ENCODE measurements at regions of chr5 and their contacts with region 1.

Region 1: DNA sequence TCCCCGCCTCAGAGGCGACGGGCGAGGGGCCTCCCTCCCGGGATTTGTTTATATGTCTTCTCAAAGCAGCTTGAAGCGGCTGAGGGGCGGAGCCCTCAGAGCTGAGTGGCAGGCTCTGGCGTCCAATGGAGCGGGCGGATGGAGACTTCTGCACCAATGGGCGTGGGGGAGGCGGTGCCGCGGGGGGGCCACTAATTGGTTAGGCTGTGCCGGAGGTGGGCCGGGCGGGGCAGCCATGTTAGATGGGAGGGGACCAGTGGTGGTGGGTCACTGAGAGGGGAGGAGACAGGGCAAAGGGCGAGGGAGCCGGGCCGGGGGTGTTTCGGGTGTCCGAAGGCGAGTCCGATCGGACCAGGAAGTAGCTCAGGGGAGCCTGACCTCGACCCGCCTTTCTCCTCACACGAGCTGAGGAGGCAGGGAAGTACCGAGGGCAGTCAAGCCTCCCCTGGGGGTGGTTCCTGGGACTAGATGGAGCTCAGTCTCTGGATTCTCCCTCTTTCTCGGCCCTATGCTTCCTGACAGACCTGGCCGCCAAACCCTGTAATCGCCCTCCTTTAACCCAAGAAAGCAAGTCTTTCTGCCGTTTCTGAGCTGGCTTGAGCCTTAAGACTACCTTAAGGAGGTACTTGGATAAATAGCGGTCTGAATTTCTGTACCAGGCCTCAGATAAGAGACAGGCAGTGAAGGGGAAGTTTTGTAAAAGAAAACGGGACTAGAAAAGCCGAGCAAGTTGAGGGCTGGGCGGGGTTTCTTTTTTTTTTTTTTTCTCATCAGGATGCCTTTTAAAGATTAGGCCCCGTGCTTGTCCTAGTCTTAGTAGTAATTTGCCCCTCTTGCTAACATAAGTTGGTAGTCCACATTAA is 1.1 kb downstream of the CREBRF start:
- DNase-seq: peak; percentile 98 to 99 (median 98)
- ATAC-seq: peak; percentile 81
- H3K4me3 ChIP-seq: peak overlapping the region; percentile 92 to 99
- H3K4me3 Mint-ChIP-seq: peak overlapping the region; percentile 94
- H3K27ac ChIP-seq: peak overlapping the region; percentile 80 to 81
- H3K27ac Mint-ChIP-seq: peak overlapping the region; percentile 94
- H3K4me1 ChIP-seq: peaks cover 36% of the 10 kb centered on the region
- H3K4me1 Mint-ChIP-seq: peaks cover 44% of the 10 kb centered on the region
- H3K27me3 ChIP-seq: no peaks in the 10 kb centered on the region
- H3K27me3 Mint-ChIP-seq: no peaks in the 10 kb centered on the region
- CTCF ChIP-seq: no peak

Region 2: DNA sequence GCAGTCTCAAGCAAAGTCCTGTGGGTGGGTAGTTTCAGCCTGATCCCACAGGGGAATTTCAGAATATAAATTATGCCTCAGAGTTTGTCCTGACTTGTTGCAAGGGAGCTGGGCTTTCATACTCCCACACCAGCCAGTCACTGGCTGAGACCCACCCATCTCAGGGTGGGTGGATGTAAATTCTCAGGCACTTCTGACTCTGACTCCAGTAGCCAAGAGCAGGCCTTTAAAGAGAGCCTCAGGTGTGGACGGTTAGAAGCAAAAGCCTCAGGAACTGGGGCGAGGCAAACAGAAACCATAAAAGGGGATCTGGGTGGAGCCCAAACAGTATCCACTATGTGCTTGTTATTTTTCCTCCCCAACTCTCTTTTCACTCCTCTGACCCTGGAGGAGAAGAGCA is 1022.3 kb before region 1 on chr5:
- CTCF ChIA-PET with region 1: no interaction called
- POLR2A ChIA-PET with region 1: no interaction called
- intact Hi-C with region 1: no loop called
- DNase-seq: no peak
- ATAC-seq: no peak
- H3K4me3 ChIP-seq: no peak overlapping the region
- H3K4me3 Mint-ChIP-seq: no peak overlapping the region
- H3K27ac ChIP-seq: no peak overlapping the region
- H3K27ac Mint-ChIP-seq: no peak overlapping the region
- H3K4me1 ChIP-seq: no peaks in the 10 kb centered on the region
- H3K4me1 Mint-ChIP-seq: peaks cover 11% of the 10 kb centered on the region
- H3K27me3 ChIP-seq: no peaks in the 10 kb centered on the region
- H3K27me3 Mint-ChIP-seq: no peaks in the 10 kb centered on the region
- CTCF ChIP-seq: no peak

Region 3: GRCh38 chr5:172179361-172179989 is 877.8 kb before region 1 on chr5:
- CTCF ChIA-PET with region 1: no interaction called
- POLR2A ChIA-PET with region 1: no interaction called
- intact Hi-C with region 1: loop called in 1 of 2 experiments (anchors 5 kb)
- DNase-seq: peak in 8 of 9 experiments; percentile 36 to 86 (median 58)
- ATAC-seq: peak; percentile 9
- H3K4me3 ChIP-seq: peak overlapping the region; percentile 49 to 51
- H3K4me3 Mint-ChIP-seq: peak overlapping the region; percentile 80
- H3K27ac ChIP-seq: peak overlapping the region; percentile 92 to 97
- H3K27ac Mint-ChIP-seq: peak overlapping the region; percentile 97
- H3K4me1 ChIP-seq: peaks cover 90% of the 10 kb centered on the region
- H3K4me1 Mint-ChIP-seq: peaks cover 89% of the 10 kb centered on the region
- H3K27me3 ChIP-seq: no peaks in the 10 kb centered on the region
- H3K27me3 Mint-ChIP-seq: no peaks in the 10 kb centered on the region
- CTCF ChIP-seq: no peak

Region 4: GRCh38 chr5:172764849-172765765 is 292.2 kb before region 1 on chr5:
- CTCF ChIA-PET with region 1: no interaction called
- POLR2A ChIA-PET with region 1: no interaction called
- intact Hi-C with region 1: loop called (anchors 1 to 2 kb)
- DNase-seq: peak; percentile 88 to 100 (median 96)
- ATAC-seq: peak; percentile 77
- H3K4me3 ChIP-seq: peak overlapping the region; percentile 41 to 48
- H3K4me3 Mint-ChIP-seq: peak overlapping the region; percentile 81
- H3K27ac ChIP-seq: peak overlapping the region; percentile 86 to 89
- H3K27ac Mint-ChIP-seq: peak overlapping the region; percentile 96
- H3K4me1 ChIP-seq: peaks cover 33% of the 10 kb centered on the region
- H3K4me1 Mint-ChIP-seq: peaks cover 52% of the 10 kb centered on the region
- H3K27me3 ChIP-seq: no peaks in the 10 kb centered on the region
- H3K27me3 Mint-ChIP-seq: no peaks in the 10 kb centered on the region
- CTCF ChIP-seq: no peak

Region 5: GRCh38 chr5:172920447-172920849 is 136.8 kb before region 1 on chr5:
- CTCF ChIA-PET with region 1: no interaction called
- POLR2A ChIA-PET with region 1: no interaction called
- intact Hi-C with region 1: loop called in 1 of 2 experiments (anchors 2 kb)
- DNase-seq: no peak
- ATAC-seq: no peak
- H3K4me3 ChIP-seq: no peak overlapping the region
- H3K4me3 Mint-ChIP-seq: no peak overlapping the region
- H3K27ac ChIP-seq: no peak overlapping the region
- H3K27ac Mint-ChIP-seq: peak overlapping the region; percentile 100
- H3K4me1 ChIP-seq: peaks cover 26% of the 10 kb centered on the region
- H3K4me1 Mint-ChIP-seq: peaks cover 27% of the 10 kb centered on the region
- H3K27me3 ChIP-seq: no peaks in the 10 kb centered on the region
- H3K27me3 Mint-ChIP-seq: no peaks in the 10 kb centered on the region
- CTCF ChIP-seq: no peak

Region 6: DNA sequence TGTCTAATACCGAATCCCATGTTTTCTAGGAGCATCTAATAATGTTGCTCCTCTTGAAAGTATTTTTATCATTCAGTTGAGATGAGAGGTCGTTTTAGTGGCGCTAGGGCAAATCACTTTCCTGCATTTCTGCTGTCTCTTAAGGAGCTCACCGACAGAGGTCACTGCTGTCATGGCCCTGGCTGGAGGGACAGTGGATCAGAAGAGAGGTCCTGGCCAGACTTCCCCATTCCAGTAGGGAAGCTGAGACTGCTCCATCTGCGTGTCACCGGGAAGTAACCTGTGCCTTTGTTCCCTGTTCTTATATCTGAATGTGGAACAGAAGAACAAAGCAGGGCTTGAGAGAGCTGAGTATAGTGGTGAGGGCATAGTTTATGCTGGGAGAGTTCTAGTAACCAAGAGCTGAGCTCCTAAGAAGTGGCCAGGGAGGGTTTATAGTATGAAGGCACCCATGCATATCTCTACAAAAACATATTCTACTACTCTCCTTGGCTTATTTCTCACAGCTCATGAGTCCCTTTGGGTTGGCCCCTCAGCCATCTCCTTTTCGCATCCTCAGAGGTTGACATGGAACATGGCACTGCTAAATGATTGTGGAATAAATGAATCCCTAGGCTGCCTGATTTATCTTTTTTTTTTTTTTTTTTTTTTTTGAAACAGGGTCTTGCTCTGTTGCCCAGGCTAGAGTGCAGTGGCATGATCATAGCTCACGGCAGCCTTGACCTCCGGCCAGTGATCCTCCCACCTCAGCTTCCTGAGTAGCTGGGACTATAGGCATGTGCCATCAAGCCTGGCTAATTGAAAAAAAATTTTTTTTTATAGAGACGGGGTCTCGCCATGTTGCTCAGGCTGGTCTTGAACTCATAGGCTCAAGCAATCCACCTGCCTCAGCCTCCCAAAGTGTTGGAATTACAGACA is 46.5 kb before region 1 on chr5:
- CTCF ChIA-PET with region 1: no interaction called
- POLR2A ChIA-PET with region 1: no interaction called
- intact Hi-C with region 1: no loop called
- DNase-seq: peak in 2 of 9 experiments; percentile 14 to 37
- ATAC-seq: no peak
- H3K4me3 ChIP-seq: no peak overlapping the region
- H3K4me3 Mint-ChIP-seq: no peak overlapping the region
- H3K27ac ChIP-seq: no peak overlapping the region
- H3K27ac Mint-ChIP-seq: peak overlapping the region; percentile 75
- H3K4me1 ChIP-seq: peaks cover 12% of the 10 kb centered on the region
- H3K4me1 Mint-ChIP-seq: peaks cover 58% of the 10 kb centered on the region
- H3K27me3 ChIP-seq: no peaks in the 10 kb centered on the region
- H3K27me3 Mint-ChIP-seq: no peaks in the 10 kb centered on the region
- CTCF ChIP-seq: no peak

Region 7: DNA sequence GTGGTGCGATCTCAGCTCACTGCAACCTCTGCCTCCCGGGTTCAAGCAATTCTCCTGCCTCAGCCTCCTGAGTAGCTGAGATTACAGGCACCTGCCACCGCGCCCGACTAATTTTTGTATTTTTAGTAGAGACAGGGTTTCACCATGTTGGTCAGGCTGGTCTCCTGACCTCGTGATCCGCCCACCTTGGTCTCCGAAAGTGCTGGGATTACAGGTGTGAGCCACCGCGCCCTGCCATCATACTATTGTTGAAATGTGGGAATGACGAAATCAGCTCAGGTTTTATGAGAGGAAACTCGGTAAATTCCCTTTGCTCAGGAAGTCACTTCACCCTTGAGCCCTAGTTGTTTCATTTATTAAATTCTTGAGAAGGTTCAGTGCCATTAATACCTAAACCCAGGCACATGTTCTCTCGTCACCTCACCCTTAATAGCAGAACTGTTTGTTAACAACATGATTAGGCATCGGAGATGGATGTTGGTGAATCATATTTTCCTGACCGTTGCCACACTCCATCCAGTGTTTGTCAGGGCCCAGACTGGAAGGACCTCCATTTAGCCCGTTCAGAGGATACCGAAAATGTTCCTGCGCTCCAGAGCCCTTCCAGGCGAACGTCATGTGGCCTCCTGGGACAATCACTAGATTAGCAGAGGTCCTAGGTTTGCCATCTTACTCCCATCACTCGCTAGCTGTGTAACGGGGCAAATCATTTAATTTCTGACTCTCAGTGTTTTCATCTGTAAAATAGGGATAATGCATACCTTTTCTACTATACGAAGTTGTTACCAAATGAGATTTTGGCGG is 21.2 kb before region 1 on chr5:
- CTCF ChIA-PET with region 1: interaction called, 3 read pairs
- POLR2A ChIA-PET with region 1: interaction called, 13 read pairs
- intact Hi-C with region 1: loop called (anchors 1 to 2 kb)
- DNase-seq: peak in 1 of 9 experiments; percentile 23
- ATAC-seq: no peak
- H3K4me3 ChIP-seq: peak overlapping the region in 1 of 2 experiments; percentile 19
- H3K4me3 Mint-ChIP-seq: peak overlapping the region; percentile 78
- H3K27ac ChIP-seq: peak overlapping the region; percentile 32 to 83
- H3K27ac Mint-ChIP-seq: peak overlapping the region; percentile 95
- H3K4me1 ChIP-seq: peaks cover 40% of the 10 kb centered on the region
- H3K4me1 Mint-ChIP-seq: peaks cover 67% of the 10 kb centered on the region
- H3K27me3 ChIP-seq: no peaks in the 10 kb centered on the region
- H3K27me3 Mint-ChIP-seq: no peaks in the 10 kb centered on the region
- CTCF ChIP-seq: no peak

Region 8: GRCh38 chr5:173887610-173888472 is 830.5 kb after region 1 on chr5 and contains the start of gene CPEB4:
- CTCF ChIA-PET with region 1: no interaction called
- POLR2A ChIA-PET with region 1: no interaction called
- intact Hi-C with region 1: loop called in 1 of 2 experiments (anchors 2 kb)
- DNase-seq: peak; percentile 92 to 100 (median 96)
- ATAC-seq: peak; percentile 95
- H3K4me3 ChIP-seq: peak within 1 kb of the TSS; percentile 68 to 76
- H3K4me3 Mint-ChIP-seq: peak within 1 kb of the TSS; percentile 100
- H3K27ac ChIP-seq: peak within 1 kb of the TSS; percentile 42 to 97
- H3K27ac Mint-ChIP-seq: peak within 1 kb of the TSS; percentile 99
- H3K4me1 ChIP-seq: peaks cover 48% of the 10 kb centered on the region
- H3K4me1 Mint-ChIP-seq: peaks cover 78% of the 10 kb centered on the region
- H3K27me3 ChIP-seq: no peaks in the 10 kb centered on the region
- H3K27me3 Mint-ChIP-seq: no peaks in the 10 kb centered on the region
- CTCF ChIP-seq: no peak
- total RNA-seq, gene CPEB4: 21.7 to 24.3 TPM